A549 (cell line): ENCODE measurements at regions of chr18 and their contacts with region 1.

Region 1: DNA sequence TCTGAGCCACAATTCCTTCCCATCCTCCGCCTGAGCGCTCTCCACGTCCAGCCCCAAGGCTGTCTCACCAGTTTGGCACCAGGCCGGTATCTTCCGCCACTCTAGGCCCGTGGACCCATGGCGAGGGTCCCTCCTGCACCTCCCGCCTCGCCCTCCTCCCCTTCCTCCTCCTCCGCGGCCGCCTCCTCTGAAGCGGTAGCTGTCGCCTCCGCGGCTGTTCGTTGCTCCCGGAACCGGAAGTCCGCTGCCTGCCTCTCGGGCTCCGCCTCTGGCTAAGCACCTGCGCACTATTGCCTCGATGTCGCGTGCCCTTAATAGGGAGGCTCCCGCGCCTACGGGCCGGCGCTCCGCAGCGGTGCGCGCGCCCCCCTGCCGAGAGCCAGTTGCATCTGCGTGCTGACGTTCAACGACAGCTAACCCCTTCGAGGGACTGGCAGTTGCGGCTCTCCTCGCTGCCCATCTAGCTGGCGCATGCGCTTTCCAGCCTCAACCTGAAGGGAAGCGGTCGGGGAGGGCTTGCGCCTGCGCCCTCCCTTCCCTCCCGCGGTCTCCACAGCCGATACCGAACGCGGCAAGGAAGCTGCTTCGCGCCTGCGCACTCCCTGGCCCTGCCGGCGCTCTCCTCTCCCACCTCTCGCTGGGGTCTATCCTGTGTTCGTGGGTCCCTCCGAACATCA is at the start of gene MBD1:
- DNase-seq: peak; percentile 84 to 96
- ATAC-seq: peak; percentile 93 to 96
- H3K4me3 ChIP-seq: peak within 1 kb of the TSS; percentile 87
- H3K27ac ChIP-seq: peak within 1 kb of the TSS; percentile 92 to 95
- H3K4me1 ChIP-seq: peaks cover 30% of the 10 kb centered on the region
- CTCF ChIP-seq: no peak
- EP300 ChIP-seq: no peak
- POLR2A ChIP-seq: peak; percentile 87
- RAD21 ChIP-seq: no peak
- polyA plus RNA-seq, gene MBD1: 27.9 and 28.6 TPM in 2 replicates

Region 2: GRCh38 chr18:50307738-50308470 is 26.5 kb after region 1 on chr18:
- CTCF ChIA-PET with region 1: interaction called, 3 read pairs
- POLR2A ChIA-PET with region 1: interaction called, 10 read pairs
- DNase-seq: peak; percentile 86 to 88
- ATAC-seq: peak; percentile 98 to 99
- H3K4me3 ChIP-seq: peak overlapping the region; percentile 48
- H3K27ac ChIP-seq: peak overlapping the region; percentile 62 to 79; a peak in 5 of 6 replicates
- H3K4me1 ChIP-seq: peaks cover 9% of the 10 kb centered on the region; the same call in 2 of the 3 replicates
- CTCF ChIP-seq: no peak
- EP300 ChIP-seq: no peak
- POLR2A ChIP-seq: no peak
- RAD21 ChIP-seq: no peak